AG04450 (cell line): ENCODE measurements at regions of chr19 and their contacts with region 1.

Region 1: DNA sequence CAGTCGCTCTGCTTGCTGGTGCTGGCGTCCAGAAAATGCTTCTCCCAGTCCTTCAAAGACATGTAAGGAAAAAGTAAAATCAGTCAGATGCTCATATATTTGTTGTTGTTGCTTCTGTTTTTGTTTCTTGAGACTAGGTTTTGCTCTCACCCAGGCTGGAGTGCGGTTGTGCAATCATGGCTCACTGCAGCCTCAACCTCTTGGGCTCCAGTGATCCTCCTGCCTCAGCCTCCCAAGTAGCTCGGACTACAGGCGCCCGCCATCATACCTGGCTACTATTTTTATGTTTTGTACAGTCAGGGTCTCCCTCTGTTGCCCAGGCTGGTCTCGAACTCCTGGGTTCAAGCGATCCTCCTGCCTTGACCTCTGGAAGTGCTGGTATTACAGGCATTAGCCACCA is 11.0 kb upstream of the EPS15L1 start:
- DNase-seq: no peak
- H3K4me3 ChIP-seq: no peak overlapping the region
- H3K27ac ChIP-seq: no peak overlapping the region
- H3K27me3 ChIP-seq: no peaks in the 10 kb centered on the region
- CTCF ChIP-seq: no peak

Region 2: GRCh38 chr19:16495982-16496612 is 13.4 kb after region 1 on chr19 and contains the starts of genes C19orf44 and CALR3:
- CTCF ChIA-PET with region 1: interaction called, 3 read pairs
- POLR2A ChIA-PET with region 1: interaction called, 15 read pairs
- DNase-seq: peak; percentile 96
- H3K4me3 ChIP-seq: peak within 1 kb of the TSS; percentile 94
- H3K27ac ChIP-seq: peak within 1 kb of the TSS; percentile 52
- H3K27me3 ChIP-seq: no peaks in the 10 kb centered on the region
- CTCF ChIP-seq: no peak
- polyA plus RNA-seq, gene C19orf44: 1.8 and 2.3 TPM in 2 replicates
- polyA plus RNA-seq, gene CALR3: not detected in 2 replicates